Esophagus muscularis mucosa (tissue), 4 donors: ENCODE measurements at regions of chr17 and their contacts with region 1.

Region 1: DNA sequence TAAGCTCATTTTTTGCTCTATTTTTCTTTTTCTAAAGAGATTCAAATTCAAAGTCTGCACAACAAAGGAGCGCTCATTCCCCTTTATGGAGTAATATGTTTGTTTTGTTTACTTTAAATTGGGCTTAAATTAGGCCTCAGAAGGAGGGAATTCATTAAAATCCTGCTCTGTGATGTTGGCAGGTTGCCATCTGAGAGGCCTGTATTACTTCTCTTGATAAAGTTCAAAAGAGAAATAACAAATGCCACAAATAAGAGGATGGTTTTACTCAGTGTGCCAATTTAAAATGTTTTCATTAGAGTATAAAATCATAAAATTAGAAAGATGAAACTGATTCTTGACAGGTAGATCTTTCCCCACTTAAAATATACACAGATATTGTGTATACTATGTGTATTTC is 54.5 kb upstream of the HLF start:
- DNase-seq: no peak
- H3K4me3 ChIP-seq: no peak overlapping the region
- H3K27ac ChIP-seq: no peak overlapping the region
- H3K4me1 ChIP-seq: no peaks in the 10 kb centered on the region
- H3K27me3 ChIP-seq: no peaks in the 10 kb centered on the region
- CTCF ChIP-seq: no peak
- EP300 ChIP-seq: no peak
- POLR2A ChIP-seq: no peak

Region 2: DNA sequence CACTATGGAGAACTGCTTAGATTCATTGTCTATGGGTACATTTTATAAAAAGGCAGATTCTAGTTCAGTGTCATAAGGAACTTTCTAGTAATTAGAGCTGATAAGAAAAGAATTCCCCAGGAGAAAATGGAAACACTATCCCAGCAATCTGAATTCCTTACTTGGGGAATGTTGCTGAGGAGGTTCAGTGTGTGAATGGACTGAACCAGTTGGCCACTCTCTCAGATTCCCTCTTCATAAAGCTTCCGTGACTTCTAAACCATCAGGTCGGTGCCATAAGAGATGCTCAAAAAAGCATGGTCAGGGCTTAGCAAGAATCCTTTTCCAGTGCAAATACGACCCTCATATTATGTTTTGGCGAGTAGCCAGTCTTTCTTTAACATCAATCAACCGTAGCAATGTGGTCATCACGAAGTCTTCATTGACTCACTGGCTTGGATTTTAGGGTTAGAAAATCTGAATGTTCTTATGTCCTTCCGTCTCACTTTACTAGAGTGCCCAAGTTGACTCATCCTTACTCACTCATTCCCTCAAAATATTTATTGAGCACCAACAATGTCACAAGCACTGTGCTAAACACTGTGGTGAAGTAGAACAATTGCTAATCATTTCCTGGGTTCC is 48.2 kb before region 1 on chr17:
- intact Hi-C with region 1: loop called (anchors 10 kb)
- DNase-seq: no peak
- H3K4me3 ChIP-seq: no peak overlapping the region
- H3K27ac ChIP-seq: no peak overlapping the region
- H3K4me1 ChIP-seq: peaks cover 0 to 26% (median 5%) of the 10 kb centered on the region in 4 donors
- H3K27me3 ChIP-seq: no peaks in the 10 kb centered on the region
- CTCF ChIP-seq: no peak
- EP300 ChIP-seq: no peak
- POLR2A ChIP-seq: no peak